ENCODE measurements at regions of chr16 and their contacts with region 1.

Region 1: DNA sequence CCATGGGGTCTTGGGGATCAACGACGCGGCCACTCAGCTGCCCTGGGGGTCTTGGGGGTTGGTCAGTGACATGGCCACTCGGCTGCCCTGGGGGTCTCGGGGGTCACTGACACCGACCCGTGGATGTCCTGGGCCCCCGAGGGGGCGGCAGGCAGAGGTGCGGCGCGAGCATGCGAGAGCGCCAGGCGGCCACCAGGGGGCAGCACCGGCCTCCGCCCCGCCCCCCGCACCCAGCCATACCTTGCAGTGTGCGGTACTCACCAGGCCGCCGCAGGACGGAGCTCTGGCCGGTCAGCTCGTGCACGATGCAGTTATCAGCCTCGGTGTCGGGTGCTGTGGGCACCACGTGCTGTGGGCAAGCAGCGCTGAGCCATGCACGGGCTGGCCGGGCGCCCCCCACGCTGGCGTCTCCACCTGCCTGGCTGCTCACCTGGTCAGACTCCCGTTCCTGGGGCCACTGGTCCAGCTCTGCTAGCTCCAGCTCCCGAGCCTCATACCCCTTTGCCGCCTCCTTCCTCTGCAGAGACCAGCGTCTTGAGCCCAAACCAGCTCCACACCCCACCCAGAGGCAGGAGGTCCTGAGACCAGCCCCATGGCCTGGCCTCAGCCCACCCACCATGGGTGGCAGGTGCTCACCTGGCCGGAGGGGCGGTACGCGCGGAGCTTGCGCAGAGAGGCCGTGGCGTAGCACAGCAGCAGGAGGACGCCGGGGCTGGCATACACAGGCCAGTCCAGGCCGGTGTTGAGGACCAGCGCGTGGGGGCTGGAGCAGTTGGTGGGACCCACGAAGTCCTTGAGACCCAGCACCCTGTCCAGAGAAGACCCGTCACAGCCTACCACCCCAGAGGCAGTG is 31.2 kb downstream of the CTU2 start:
- DNase-seq: peak; percentile 77
- ATAC-seq: peak; percentile 97
- H3K4me3 Mint-ChIP-seq: no peak overlapping the region
- H3K27ac Mint-ChIP-seq: no peak overlapping the region
- H3K4me1 Mint-ChIP-seq: peaks cover 6% of the 10 kb centered on the region
- H3K27me3 Mint-ChIP-seq: no peaks in the 10 kb centered on the region
- CTCF ChIP-seq: peak; percentile 95

Region 2: DNA sequence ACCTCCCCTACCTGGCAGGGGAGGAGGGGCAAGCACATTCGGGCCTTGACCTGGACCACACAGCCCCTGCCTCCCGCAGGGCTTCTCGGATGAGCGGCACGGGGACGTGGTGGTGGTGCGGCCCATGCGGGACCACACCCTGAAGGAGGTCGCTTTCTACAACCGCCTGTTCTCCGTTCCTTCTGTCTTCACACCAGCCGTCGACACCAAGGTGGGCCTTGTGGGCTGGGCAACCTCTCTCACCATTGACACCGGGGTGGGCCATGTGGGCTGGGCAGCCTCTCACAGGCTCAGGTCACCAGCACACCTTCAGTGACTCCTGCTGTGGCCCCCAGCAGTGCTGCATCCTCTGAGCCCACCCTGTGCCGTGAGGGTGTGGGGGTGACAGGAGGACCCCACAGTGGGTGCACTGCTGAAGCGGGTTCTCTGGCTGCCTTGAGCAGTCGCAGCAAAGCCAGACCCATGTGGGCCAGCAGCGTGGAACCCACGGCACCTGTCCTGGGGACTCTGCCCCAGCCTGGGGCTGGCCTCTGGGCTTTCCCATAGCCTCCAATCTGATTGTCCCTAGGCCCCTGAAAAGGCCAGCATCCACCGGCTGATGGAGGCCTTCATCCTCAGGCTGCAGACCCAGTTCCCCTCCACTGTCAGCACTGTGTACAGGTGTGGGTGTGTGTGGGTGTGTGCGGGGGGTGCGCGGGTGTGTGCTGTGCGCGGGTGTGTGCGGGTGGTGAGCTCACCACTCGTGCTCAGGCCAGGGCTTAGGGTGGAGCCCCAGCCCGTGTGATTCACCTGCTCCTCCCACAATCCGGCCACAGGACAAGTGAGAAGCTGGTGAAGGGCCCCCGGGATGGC is 23.7 kb before region 1 on chr16:
- CTCF ChIA-PET with region 1: no interaction called
- POLR2A ChIA-PET with region 1: no interaction called
- intact Hi-C with region 1: no loop called
- DNase-seq: no peak
- ATAC-seq: no peak
- H3K4me3 Mint-ChIP-seq: no peak overlapping the region
- H3K27ac Mint-ChIP-seq: no peak overlapping the region
- H3K4me1 Mint-ChIP-seq: no peaks in the 10 kb centered on the region
- H3K27me3 Mint-ChIP-seq: no peaks in the 10 kb centered on the region
- CTCF ChIP-seq: no peak

Region 3: GRCh38 chr16:88759245-88759975 is 21.9 kb after region 1 on chr16:
- CTCF ChIA-PET with region 1: interaction called, 11 read pairs
- POLR2A ChIA-PET with region 1: no interaction called
- intact Hi-C with region 1: no loop called
- DNase-seq: no peak
- ATAC-seq: peak; percentile 36
- H3K4me3 Mint-ChIP-seq: no peak overlapping the region
- H3K27ac Mint-ChIP-seq: no peak overlapping the region
- H3K4me1 Mint-ChIP-seq: peaks cover 16% of the 10 kb centered on the region
- H3K27me3 Mint-ChIP-seq: no peaks in the 10 kb centered on the region
- CTCF ChIP-seq: no peak

Region 4: DNA sequence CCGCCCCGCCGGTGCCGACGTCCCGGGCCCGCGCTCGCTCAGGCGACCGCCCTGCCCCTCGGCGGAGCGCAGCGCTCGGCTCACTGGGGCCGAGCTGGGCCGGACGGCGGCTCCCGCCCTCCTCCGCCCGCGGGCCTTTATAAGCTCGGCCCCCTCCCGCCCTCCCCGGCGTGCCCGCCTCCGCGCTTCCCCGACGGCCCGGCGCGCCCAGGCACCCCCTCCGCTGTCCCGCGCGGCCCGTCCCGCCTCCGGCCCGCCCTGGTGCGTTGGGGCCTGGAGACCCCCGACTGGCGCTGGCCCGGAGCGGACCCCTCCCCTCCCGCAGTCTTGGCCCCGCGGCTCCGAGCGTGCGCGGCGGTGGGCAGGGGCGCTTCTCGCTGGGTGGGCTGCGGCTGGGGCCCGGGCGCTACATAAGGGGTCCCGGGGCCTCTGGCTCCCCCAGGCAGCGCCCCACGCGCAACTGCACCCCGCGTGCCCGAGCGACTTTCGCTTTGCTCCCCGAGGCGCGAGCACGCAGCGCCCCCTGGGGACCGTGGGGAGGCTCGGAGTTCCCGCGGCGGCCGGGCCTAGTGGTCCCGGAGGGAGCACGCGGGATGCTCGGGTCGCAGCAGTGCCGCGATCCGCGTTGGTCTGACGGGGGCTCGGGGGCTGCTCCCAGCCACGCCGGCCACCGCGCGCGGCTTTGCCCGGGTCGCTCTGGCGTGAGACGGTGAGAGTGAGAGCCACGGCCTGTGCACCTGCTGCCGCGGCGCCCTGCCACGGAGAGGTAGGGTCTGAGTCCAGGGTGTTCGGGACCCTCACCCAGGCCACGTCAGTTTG is 47.8 kb after region 1 on chr16 and contains the start of gene PIEZO1:
- CTCF ChIA-PET with region 1: interaction called, 56 read pairs
- POLR2A ChIA-PET with region 1: interaction called, 31 read pairs
- intact Hi-C with region 1: loop called (anchors 1 kb)
- DNase-seq: peak; percentile 78
- ATAC-seq: peak; percentile 28
- H3K4me3 Mint-ChIP-seq: peak within 1 kb of the TSS; percentile 85
- H3K27ac Mint-ChIP-seq: peak within 1 kb of the TSS; percentile 76
- H3K4me1 Mint-ChIP-seq: peaks cover 47% of the 10 kb centered on the region
- H3K27me3 Mint-ChIP-seq: no peaks in the 10 kb centered on the region
- CTCF ChIP-seq: no peak
- total RNA-seq, gene PIEZO1: 75.2 and 85.9 TPM in 2 replicates

Region 5: GRCh38 chr16:88803264-88803987 is 65.9 kb after region 1 on chr16 and contains the start of gene CDT1:
- CTCF ChIA-PET with region 1: interaction called, 6 read pairs
- POLR2A ChIA-PET with region 1: interaction called, 6 read pairs
- intact Hi-C with region 1: loop called (anchors 1 kb)
- DNase-seq: peak; percentile 88
- ATAC-seq: peak; percentile 64
- H3K4me3 Mint-ChIP-seq: peak within 1 kb of the TSS; percentile 79
- H3K27ac Mint-ChIP-seq: peak within 1 kb of the TSS; percentile 79
- H3K4me1 Mint-ChIP-seq: peaks cover 22% of the 10 kb centered on the region
- H3K27me3 Mint-ChIP-seq: no peaks in the 10 kb centered on the region
- CTCF ChIP-seq: no peak
- total RNA-seq, gene CDT1: 4.3 and 5.5 TPM in 2 replicates

Region 6: DNA sequence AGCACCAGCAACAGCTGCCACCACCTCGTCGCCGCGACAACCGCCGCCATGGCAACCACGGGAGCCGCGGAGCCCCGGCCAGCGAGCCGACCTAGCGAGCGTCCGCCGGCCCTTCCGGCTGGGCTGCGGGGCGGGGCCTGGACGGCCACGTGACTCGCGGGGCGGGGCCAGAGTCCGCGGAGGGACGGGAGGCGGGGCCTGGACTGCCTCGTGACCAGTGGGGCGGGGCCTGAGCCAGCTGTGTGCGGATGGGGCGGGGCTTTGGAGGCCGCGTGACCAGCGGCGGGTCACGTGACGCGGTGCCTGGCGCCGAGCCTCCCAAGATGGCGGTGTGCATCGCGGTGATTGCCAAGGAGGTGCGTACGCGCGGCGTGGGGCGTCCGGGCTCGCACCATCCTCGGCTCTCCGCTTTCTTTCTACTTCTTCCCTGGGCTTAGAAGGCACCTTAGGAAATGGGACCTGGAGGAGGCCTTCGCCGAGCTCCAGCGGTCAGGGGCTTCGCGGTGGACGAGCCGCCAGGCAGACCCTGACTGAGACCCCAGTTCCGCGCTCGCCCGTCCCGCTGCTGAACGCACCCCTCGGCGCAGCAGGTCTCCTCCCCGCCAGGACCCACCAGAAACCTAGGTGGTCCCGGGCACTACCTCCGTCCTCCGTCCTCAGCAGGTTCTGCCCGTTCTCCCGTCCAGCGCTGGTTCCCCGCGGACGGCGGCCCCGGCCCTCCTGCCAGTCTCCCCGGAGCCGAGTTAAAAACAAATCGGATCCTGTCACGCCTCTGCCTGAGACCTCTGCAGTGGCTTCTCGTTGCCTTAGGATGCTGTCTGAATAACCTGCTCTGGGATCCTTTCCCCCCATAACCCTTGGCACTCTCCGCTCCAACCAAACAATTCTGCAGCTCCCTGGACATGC is 119.6 kb after region 1 on chr16 and contains the starts of genes GALNS and TRAPPC2L:
- CTCF ChIA-PET with region 1: interaction called, 22 read pairs
- POLR2A ChIA-PET with region 1: interaction called, 5 read pairs
- intact Hi-C with region 1: loop called (anchors 1 kb)
- DNase-seq: peak; percentile 99
- ATAC-seq: peak; percentile 88
- H3K4me3 Mint-ChIP-seq: peak within 1 kb of the TSS; percentile 92
- H3K27ac Mint-ChIP-seq: peak within 1 kb of the TSS; percentile 86
- H3K4me1 Mint-ChIP-seq: peaks cover 39% of the 10 kb centered on the region
- H3K27me3 Mint-ChIP-seq: no peaks in the 10 kb centered on the region
- CTCF ChIP-seq: no peak
- total RNA-seq, gene GALNS: 39.9 and 48.3 TPM in 2 replicates
- total RNA-seq, gene TRAPPC2L: 38.7 and 54.8 TPM in 2 replicates

Region 7: DNA sequence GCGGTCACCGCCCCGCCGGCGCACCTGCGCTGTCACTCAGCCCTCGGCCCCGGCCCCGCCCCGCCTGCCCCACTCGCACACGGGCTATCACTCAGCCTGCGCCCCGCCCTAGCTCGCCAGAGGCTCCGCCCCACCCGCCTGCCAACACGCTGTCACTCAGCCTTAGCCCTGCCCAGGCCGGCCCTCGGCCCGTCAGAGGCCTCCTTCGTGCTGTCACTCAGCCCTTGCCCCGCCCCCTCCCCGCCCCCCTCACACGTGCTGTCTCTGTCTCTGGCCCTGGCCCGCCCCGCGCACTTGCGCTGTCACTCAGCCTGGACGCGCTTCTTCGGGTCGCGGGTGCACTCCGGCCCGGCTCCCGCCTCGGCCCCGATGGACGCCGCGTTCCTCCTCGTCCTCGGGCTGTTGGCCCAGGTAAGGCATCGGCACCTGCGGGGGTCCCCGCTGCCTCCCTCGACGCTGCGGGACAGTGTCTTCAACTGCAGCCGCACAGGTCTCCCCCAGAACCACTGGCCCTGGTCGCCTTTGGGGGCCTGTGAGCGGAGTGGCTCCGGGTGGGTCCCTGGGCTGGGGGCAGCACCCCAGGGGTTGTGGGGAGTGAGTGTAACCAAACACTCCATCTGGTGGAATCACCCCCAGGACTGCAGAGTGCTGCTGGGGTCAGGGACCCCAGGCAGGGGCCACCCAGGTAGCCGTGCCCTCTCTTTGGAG is 434.1 kb after region 1 on chr16 and contains the start of gene CDH15:
- CTCF ChIA-PET with region 1: interaction called, 20 read pairs
- POLR2A ChIA-PET with region 1: no interaction called
- intact Hi-C with region 1: loop called (anchors 1 kb)
- DNase-seq: peak; percentile 84
- ATAC-seq: peak; percentile 96
- H3K4me3 Mint-ChIP-seq: peak within 1 kb of the TSS; percentile 66
- H3K27ac Mint-ChIP-seq: no peak within 1 kb of the TSS
- H3K4me1 Mint-ChIP-seq: peaks cover 12% of the 10 kb centered on the region
- H3K27me3 Mint-ChIP-seq: peaks cover 2% of the 10 kb centered on the region
- CTCF ChIP-seq: no peak
- total RNA-seq, gene CDH15: not detected in 2 replicates